ENCODE measurements at regions of chr12 and their contacts with region 1.

Region 1: DNA sequence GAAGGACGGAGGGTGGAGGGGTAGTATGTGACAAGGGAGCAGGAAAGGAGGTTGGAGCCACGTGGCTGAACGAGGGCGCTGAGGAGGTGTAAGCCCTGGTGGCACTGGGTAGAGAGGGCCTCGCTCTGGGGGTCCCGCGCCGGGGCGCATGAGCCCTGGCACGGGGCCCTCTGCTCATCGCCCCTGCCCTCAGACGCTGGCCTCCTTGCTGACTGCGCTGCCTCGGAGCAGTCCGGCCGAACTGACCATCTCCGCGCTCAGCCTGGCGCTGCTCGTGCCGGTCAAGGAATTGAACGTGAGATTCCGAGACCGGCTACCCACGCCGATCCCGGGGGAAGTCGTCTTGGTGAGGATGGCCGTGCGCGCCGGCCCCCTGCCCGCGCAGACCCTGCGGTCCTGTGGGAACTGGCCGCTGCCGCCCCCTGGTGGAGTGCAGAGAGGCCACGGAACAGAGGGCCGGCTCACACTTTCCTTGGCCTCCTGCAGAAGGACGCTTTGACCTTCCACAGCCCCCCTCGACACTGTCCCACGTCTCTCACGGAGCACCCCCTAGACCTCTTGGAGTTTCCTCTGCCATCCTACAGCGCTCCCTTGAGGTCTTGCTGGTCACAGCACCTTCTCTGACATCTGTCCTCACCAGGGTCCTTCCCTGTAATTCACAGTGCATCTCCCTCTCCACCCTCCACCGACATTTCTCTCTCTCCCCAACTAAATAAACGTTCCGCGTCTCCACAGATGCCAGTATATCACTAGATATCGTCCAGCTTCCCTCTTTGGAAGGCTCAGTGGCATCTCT is 10.5 kb downstream of the ARHGEF25 start:
- DNase-seq: peak; percentile 41
- H3K4me3 ChIP-seq: peak overlapping the region; percentile 2 to 23
- H3K27ac ChIP-seq: no peak overlapping the region
- H3K4me1 ChIP-seq: peaks cover 8% of the 10 kb centered on the region
- H3K27me3 ChIP-seq: peaks cover 14% of the 10 kb centered on the region
- CTCF ChIP-seq: peak; percentile 84 to 90 (median 85)
- POLR2A ChIP-seq: no peak

Region 2: DNA sequence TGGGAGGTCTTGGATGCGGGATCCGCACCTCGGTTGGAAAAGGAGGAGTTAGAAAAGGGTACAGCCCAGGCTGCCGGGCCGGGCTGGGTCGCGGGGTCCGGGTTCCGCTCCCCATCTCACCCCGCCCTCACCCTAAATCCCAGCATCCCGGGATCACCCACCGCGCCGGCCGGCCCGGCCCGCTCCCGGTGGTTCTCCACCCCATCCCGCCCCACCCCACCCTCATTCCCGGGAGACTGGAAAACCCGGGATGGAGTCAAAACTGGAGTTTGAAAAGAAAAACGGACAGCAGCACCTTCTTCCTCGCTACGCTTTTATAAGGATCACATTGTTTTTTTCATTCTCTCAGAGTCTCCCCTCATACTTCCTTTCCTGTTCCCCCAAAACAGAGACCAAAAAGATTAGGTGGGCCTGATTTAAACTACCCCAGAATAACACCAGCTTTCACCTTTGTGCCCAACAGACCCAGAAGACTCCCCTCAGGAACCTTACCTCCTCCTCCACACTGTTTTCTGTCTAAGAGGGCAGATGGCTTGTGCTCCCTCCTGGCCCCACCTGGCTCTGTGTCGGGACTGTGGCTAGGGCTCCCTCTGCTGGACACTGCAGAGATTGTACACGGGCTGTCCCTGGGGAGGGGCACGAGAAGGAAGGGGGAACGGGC is 159.3 kb before region 1 on chr12:
- intact Hi-C with region 1: loop called (anchors 10 kb)
- DNase-seq: peak; percentile 82
- H3K4me3 ChIP-seq: peak overlapping the region; percentile 55 to 60
- H3K27ac ChIP-seq: peak overlapping the region; percentile 86 to 89
- H3K4me1 ChIP-seq: peaks cover 9% of the 10 kb centered on the region
- H3K27me3 ChIP-seq: no peaks in the 10 kb centered on the region
- CTCF ChIP-seq: peak; percentile 88 to 97 (median 94)
- POLR2A ChIP-seq: peak; percentile 50

Region 3: DNA sequence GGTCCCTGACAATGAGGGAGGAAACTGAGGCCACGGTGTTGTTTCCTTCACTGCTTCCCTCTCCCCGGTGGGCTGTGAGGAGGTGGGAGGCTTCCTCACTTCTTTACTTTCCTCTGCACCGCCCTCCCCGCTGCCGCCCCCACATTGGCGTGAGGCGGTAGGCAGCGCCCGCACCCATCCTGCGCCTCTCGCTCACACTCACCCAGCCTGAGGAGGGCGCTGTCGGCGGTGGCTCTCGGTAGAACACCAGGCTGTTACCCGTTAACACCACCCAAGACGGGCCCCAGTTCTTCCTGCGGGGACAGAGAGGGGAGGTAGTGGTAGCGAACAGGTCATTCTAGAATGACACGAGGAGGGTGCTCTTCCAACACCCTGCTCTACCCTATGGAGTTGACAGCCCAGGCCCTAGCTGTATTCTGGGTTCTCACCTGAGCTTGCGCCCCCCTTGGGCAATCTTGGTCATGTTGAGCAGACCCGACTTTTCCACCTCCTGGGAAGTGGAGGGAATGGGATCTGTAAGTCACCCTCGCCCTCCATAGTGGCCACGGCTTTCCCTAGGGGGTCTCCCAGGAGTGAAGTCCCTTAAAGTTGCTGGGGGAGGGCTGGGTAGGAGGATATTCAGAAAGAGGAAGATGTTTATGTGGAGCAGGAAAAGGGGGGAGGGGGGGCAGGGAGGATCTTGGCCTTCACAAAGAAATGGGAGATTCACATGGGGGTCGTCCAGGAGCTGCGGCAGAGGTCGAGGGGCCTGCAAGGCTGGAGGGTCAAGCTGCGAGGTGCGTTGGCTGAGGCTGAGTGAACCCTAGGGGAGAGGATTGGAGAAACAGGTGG is 145.3 kb before region 1 on chr12:
- intact Hi-C with region 1: no loop called
- DNase-seq: no peak
- H3K4me3 ChIP-seq: peak overlapping the region; percentile 12 to 26
- H3K27ac ChIP-seq: no peak overlapping the region
- H3K4me1 ChIP-seq: peaks cover 13% of the 10 kb centered on the region
- H3K27me3 ChIP-seq: peaks cover 10% of the 10 kb centered on the region
- CTCF ChIP-seq: peak in 1 of 4 experiments; percentile 16
- POLR2A ChIP-seq: no peak

Region 4: GRCh38 chr12:57583008-57583831 is 38.5 kb before region 1 on chr12:
- intact Hi-C with region 1: loop called (anchors 1 kb)
- DNase-seq: peak; percentile 63
- H3K4me3 ChIP-seq: no peak overlapping the region
- H3K27ac ChIP-seq: no peak overlapping the region
- H3K4me1 ChIP-seq: no peaks in the 10 kb centered on the region
- H3K27me3 ChIP-seq: no peaks in the 10 kb centered on the region
- CTCF ChIP-seq: peak; percentile 91 to 93 (median 92)
- POLR2A ChIP-seq: no peak

Region 5: DNA sequence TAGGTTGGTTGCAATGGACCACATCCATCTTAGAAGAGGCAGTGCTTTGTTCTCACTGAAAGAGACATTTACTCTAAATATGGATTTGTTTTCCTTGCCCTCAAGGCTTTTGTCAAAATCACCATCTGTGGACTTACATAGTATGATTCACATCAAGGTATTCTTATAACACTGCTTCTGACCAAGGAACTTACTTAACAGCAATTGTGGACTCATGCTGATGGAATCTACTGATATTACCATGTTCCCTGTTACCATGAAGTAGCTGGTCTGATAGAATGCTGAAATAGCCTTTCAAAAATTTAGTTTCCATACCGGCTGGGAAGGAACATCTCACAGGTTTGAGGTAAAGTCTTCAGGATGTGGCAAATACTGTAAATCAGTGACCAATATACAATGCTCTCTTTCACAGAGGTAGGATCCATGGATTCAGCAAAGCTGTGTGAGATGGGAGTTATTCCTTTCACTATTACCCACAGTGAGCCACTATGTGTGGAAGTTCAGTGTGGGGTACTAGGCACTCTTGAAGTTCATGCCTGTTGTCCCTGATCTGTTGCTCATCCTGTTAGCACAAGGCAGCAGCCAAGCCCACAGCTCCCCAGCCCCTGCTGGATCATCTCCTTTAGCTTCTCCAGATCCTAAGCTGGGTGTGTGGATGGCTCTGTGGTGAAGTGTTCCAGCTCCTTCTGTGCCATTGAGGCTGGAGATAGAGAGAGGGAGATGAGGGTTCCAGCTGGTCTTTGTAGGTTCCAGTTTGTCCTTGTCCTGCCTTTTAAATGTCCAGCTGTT is 446.1 kb after region 1 on chr12:
- intact Hi-C with region 1: no loop called
- DNase-seq: no peak
- H3K4me3 ChIP-seq: no peak overlapping the region
- H3K27ac ChIP-seq: no peak overlapping the region
- H3K4me1 ChIP-seq: no peaks in the 10 kb centered on the region
- H3K27me3 ChIP-seq: no peaks in the 10 kb centered on the region
- CTCF ChIP-seq: no peak
- POLR2A ChIP-seq: no peak